Activated CD8-positive, alpha-beta T cell treated with anti-CD3 and anti-CD28 coated beads, Interleukin-2, amount 10 ng/mL, durations not matched to agents 7 days and 5 days (primary cell): ENCODE measurements at regions of chr19 and their contacts with region 1.

Region 1: DNA sequence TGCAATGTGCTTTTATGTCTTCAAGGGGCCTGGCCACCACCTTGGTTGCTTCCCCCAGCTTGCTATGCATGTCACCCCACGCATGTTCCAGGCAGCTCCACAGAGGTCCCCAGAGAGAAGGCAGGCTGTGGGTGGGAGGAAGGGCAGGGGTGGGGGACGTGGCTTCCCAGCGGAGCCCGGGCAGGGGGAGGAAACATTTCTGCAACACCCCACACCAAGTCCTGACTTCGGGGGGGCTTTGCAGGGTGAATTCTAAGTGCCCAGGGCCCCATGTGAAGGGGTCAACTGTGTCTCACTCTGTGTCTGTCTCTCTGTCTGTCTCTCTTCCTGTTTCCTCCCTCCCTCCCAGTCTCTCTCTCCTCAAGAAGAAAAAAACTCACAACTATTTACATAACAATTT is 39.6 kb downstream of the LTBP4 start:
- DNase-seq: no peak
- ATAC-seq: no peak
- H3K4me3 Mint-ChIP-seq: no peak overlapping the region
- H3K27ac Mint-ChIP-seq: no peak overlapping the region
- H3K4me1 Mint-ChIP-seq: peaks cover 6% of the 10 kb centered on the region
- H3K27me3 Mint-ChIP-seq: no peaks in the 10 kb centered on the region

Region 2: GRCh38 chr19:40305403-40305802 is 335.3 kb before region 1 on chr19:
- CTCF ChIA-PET with region 1: interaction called, 19 read pairs
- POLR2A ChIA-PET with region 1: no interaction called
- DNase-seq: peak; percentile 89
- ATAC-seq: peak; percentile 82
- H3K4me3 Mint-ChIP-seq: no peak overlapping the region
- H3K27ac Mint-ChIP-seq: no peak overlapping the region
- H3K4me1 Mint-ChIP-seq: peaks cover 3% of the 10 kb centered on the region
- H3K27me3 Mint-ChIP-seq: no peaks in the 10 kb centered on the region

Region 3: DNA sequence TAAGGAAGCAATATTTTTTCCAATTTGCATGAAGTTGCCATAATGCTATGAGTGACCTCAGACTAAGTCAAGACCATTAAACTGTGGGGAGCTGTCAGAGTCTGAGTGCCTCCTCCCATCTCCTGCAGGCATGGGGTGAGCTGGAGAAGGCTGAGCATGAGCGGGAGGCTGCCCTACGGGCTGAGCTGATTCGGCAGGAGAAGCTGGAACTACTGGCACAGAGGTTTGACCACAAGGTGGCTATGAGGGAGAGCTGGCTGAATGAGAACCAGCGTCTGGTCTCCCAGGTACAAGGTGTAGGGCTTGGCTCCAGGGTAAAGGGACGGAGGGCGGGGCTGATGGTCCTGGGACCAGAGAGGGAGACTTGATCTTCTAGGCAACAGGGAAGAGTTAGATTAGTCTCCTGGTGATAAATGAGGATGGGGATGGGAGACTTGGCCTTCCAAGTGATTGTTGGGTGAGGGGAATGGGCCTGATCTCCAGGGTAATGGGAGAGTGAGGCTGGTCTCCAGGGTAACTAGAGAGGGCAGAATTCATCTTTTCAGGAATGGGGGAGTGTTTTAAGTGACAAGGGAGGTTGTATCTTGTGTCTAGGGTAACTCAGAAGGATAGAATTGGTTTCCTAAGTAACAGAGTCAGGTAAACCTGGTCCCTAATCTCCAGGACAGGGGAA is 138.0 kb before region 1 on chr19:
- CTCF ChIA-PET with region 1: no interaction called
- POLR2A ChIA-PET with region 1: no interaction called
- DNase-seq: no peak
- ATAC-seq: no peak
- H3K4me3 Mint-ChIP-seq: no peak overlapping the region
- H3K27ac Mint-ChIP-seq: no peak overlapping the region
- H3K4me1 Mint-ChIP-seq: no peaks in the 10 kb centered on the region
- H3K27me3 Mint-ChIP-seq: peaks cover 2% of the 10 kb centered on the region

Region 4: GRCh38 chr19:40523322-40524047 is 117.3 kb before region 1 on chr19:
- CTCF ChIA-PET with region 1: interaction called, 14 read pairs
- POLR2A ChIA-PET with region 1: no interaction called
- DNase-seq: peak; percentile 57
- ATAC-seq: peak; percentile 81
- H3K4me3 Mint-ChIP-seq: no peak overlapping the region
- H3K27ac Mint-ChIP-seq: no peak overlapping the region
- H3K4me1 Mint-ChIP-seq: no peaks in the 10 kb centered on the region
- H3K27me3 Mint-ChIP-seq: peaks cover 18% of the 10 kb centered on the region

Region 5: DNA sequence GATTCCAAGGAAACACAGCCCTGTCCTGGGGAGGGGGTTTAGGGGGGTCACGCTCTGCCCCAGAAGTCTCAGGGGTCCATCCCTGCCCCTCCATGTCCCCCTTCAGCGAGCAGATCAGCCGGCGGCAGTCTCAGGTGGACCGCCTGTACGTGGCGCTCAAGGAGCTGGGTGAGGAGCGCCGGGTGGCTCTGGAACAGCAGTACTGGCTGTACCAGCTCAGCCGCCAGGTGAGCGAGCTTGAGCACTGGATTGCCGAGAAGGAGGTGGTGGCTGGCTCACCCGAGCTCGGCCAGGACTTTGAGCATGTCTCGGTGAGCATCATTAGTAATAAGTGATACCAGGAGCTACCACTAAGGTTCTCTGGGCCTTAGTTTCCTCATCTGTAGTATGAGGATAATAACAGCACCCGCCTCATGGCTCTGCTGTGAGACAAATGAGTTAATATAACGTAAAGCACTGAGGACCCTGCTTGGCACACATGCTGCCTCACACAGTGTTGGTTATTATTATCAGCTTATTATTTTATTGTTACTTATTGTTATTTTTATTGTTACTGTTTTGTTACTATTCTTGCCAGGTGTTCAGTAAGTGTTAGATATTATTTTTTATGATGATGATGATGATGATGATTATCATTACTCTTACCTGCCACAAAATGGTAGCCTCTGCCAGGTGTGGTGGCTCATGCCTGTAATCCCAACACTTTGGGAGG is 84.6 kb before region 1 on chr19:
- CTCF ChIA-PET with region 1: no interaction called
- POLR2A ChIA-PET with region 1: no interaction called
- DNase-seq: no peak
- ATAC-seq: no peak
- H3K4me3 Mint-ChIP-seq: no peak overlapping the region
- H3K27ac Mint-ChIP-seq: no peak overlapping the region
- H3K4me1 Mint-ChIP-seq: no peaks in the 10 kb centered on the region
- H3K27me3 Mint-ChIP-seq: peaks cover 29% of the 10 kb centered on the region

Region 6: DNA sequence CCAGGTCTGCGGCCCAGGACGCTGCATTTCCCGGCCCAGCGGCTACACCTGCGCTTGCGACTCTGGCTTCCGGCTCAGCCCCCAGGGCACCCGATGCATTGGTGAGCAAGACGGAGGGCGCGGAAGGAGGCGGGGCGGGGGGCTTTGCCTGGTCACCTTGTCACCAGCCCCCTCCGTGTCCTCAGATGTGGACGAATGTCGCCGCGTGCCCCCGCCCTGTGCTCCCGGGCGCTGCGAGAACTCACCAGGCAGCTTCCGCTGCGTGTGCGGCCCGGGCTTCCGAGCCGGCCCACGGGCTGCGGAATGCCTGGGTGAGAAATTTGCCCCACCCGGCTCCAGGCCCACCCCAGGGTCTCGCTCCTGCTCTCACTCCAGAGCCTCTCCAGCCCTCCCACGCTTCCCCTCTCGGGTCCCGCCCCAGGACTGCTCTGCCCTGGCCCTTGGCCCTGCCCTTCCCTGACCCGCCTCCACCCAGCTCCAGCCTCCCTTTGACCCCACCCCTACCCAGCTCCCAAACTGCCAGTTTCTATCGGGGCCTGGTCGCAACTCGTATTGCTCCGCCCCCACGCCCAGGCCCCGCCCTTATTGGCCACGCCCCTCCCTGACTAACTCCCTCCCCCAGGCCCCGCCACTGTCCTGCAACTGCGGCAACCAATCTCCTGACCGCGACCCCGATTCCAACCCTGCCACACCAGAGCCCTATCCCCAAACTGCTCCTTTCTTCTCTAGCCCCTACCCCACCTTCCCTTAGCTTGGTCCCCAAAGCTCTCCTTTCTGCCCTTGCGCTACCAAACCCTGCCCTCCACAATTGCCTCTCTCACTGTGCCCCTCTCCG is 31.0 kb before region 1 on chr19:
- CTCF ChIA-PET with region 1: interaction called, 58 read pairs
- POLR2A ChIA-PET with region 1: no interaction called
- DNase-seq: peak; percentile 91
- ATAC-seq: peak; percentile 54
- H3K4me3 Mint-ChIP-seq: peak overlapping the region; percentile 76
- H3K27ac Mint-ChIP-seq: peak overlapping the region; percentile 91
- H3K4me1 Mint-ChIP-seq: peaks cover 78% of the 10 kb centered on the region
- H3K27me3 Mint-ChIP-seq: no peaks in the 10 kb centered on the region

Region 7: DNA sequence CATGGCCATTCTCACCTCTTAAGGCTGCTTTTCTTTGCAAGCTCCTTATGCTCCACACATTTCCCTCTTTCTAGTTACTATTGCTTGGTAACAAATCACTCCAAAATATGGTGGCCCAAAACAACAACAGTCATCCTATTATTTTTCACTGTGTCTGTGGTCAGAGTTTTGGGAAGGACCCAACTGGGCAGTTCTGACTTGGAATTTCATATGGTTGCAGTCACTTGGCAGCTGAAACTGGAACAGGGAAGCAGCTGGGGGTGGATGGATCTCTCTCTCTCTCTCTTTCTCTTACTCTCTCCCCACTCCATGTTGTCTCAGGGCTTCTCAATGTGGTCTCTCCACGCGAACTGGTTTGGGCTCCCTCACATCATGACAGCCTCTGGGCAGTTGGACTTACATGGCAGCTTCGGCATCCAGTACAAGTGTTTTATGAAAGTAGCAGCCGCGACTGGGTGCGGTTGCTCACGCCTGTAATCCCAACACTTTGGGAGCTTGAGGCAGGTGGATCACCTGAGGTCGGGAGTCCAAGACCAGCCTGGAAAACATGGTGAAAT is 10.1 kb after region 1 on chr19:
- CTCF ChIA-PET with region 1: interaction called, 42 read pairs
- POLR2A ChIA-PET with region 1: no interaction called
- DNase-seq: no peak
- ATAC-seq: no peak
- H3K4me3 Mint-ChIP-seq: no peak overlapping the region
- H3K27ac Mint-ChIP-seq: no peak overlapping the region
- H3K4me1 Mint-ChIP-seq: no peaks in the 10 kb centered on the region
- H3K27me3 Mint-ChIP-seq: no peaks in the 10 kb centered on the region

Region 8: DNA sequence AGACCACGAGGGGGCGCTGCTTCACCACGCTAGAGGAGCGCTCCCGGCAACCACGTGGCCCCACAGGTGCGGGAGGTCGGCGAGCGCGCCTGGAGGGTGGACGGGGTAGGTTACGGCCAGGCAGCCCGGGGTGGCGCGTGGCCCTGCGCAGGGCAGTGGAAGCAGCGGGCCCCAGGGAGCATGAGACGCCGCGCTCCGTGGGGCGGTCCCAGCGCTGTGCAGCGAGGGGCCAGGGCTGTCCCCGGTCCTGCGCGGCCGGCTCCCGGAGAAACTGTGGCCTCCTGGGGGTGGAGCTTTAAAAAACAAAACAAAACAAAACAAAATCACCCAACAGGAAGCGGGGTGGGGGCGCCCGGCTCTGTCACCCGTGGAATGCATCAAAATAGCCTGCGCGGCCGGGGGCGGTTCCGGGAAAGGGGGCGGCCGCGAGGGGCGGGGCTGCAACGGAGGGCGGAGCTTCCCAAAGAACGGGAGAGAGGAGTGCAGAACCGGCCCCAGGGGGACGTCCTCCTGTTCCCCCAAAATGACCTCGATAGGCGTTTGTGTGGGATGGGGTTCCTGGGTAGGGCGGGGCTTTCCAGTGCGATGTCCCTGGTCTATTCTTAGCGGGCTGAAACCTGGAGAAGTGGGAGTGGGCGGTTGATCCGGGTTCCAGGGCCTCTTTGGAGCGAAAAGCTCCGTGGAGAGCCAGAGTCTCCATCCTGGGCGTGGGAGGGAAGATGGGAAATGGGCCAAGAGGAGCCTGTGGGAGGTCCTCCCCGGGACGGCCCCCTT is 22.4 kb after region 1 on chr19:
- CTCF ChIA-PET with region 1: interaction called, 16 read pairs
- POLR2A ChIA-PET with region 1: no interaction called
- DNase-seq: peak; percentile 92
- ATAC-seq: peak; percentile 96
- H3K4me3 Mint-ChIP-seq: peak overlapping the region; percentile 78
- H3K27ac Mint-ChIP-seq: peak overlapping the region; percentile 81
- H3K4me1 Mint-ChIP-seq: peaks cover 7% of the 10 kb centered on the region
- H3K27me3 Mint-ChIP-seq: peaks cover 6% of the 10 kb centered on the region